Gastrocnemius medialis (tissue), 4 donors: ENCODE measurements at regions of chr12 and their contacts with region 1.

Region 1: GRCh38 chr12:105922670-105923102 is 216.1 kb downstream of the NUAK1 start:
- DNase-seq: peak; percentile 40 to 45
- ATAC-seq: peak; percentile 93 to 99
- H3K4me3 ChIP-seq: no peak overlapping the region
- H3K27ac ChIP-seq: peak overlapping the region; percentile 77 to 89 (median 86)
- H3K4me1 ChIP-seq: peaks cover 25 to 34% of the 10 kb centered on the region in 2 donors
- H3K27me3 ChIP-seq: no peaks in the 10 kb centered on the region
- CTCF ChIP-seq: no peak
- POLR2A ChIP-seq: peak in 1 of 2 donors; percentile 26

Region 2: GRCh38 chr12:105820429-105821140 is 102.1 kb before region 1 on chr12:
- in situ Hi-C with region 1: no loop called
- intact Hi-C with region 1: loop called (anchors 1 kb)
- DNase-seq: peak; percentile 79 to 85
- ATAC-seq: peak; percentile 96 to 99
- H3K4me3 ChIP-seq: no peak overlapping the region
- H3K27ac ChIP-seq: peak overlapping the region; percentile 76 to 85 (median 78)
- H3K4me1 ChIP-seq: peaks cover 23 to 28% of the 10 kb centered on the region in 2 donors
- H3K27me3 ChIP-seq: no peaks in the 10 kb centered on the region
- CTCF ChIP-seq: no peak
- POLR2A ChIP-seq: no peak

Region 3: GRCh38 chr12:105852951-105853350 is 69.7 kb before region 1 on chr12:
- in situ Hi-C with region 1: no loop called
- intact Hi-C with region 1: no loop called
- DNase-seq: peak in 1 of 2 donors; percentile 43
- ATAC-seq: peak; percentile 34 to 55
- H3K4me3 ChIP-seq: peak overlapping the region in 3 of 4 donors; percentile 6 to 36 (median 17)
- H3K27ac ChIP-seq: peak overlapping the region in 3 of 4 donors; percentile 45 to 66 (median 47)
- H3K4me1 ChIP-seq: peaks cover 21 to 25% of the 10 kb centered on the region in 2 donors
- H3K27me3 ChIP-seq: no peaks in the 10 kb centered on the region
- CTCF ChIP-seq: no peak
- POLR2A ChIP-seq: no peak

Region 4: DNA sequence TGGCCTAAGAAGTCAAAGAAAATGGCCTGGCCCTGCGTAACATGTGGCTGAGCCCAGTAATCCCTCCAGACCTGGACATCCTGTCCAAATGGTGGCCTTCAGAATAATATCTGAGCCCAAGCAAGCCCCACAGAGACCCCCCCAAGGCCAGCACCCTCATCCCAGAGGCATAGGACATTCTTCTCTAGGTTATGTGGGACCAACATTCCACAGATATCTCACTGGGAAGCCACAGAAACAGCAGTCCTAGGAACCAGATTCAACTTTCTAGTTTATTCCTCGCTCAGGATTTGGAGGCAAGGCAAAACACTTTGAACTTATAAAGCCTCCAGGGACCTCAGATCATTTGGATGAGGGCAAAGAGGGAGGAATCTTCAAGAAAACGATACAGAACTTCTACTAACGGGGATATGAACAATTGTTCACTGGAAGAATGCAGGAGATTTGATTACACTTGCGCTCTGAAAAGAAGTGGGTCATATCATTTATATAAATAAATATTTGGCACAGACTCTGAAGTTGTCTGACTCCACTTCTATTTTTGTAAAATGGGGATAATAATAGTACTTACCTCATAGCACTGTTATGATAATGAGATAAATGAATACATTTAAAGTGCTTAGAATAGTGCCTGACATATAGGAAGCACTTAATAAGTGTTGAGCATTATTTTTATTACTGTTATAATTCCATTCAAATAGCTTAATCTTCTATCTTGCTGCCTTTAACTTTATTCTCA is 44.5 kb after region 1 on chr12:
- in situ Hi-C with region 1: no loop called
- intact Hi-C with region 1: loop called (anchors 5 kb)
- DNase-seq: no peak
- ATAC-seq: peak; percentile 97 to 99
- H3K4me3 ChIP-seq: no peak overlapping the region
- H3K27ac ChIP-seq: peak overlapping the region; percentile 61 to 81 (median 76)
- H3K4me1 ChIP-seq: peaks cover 16 to 21% of the 10 kb centered on the region in 2 donors
- H3K27me3 ChIP-seq: no peaks in the 10 kb centered on the region
- CTCF ChIP-seq: no peak
- POLR2A ChIP-seq: no peak

Region 5: DNA sequence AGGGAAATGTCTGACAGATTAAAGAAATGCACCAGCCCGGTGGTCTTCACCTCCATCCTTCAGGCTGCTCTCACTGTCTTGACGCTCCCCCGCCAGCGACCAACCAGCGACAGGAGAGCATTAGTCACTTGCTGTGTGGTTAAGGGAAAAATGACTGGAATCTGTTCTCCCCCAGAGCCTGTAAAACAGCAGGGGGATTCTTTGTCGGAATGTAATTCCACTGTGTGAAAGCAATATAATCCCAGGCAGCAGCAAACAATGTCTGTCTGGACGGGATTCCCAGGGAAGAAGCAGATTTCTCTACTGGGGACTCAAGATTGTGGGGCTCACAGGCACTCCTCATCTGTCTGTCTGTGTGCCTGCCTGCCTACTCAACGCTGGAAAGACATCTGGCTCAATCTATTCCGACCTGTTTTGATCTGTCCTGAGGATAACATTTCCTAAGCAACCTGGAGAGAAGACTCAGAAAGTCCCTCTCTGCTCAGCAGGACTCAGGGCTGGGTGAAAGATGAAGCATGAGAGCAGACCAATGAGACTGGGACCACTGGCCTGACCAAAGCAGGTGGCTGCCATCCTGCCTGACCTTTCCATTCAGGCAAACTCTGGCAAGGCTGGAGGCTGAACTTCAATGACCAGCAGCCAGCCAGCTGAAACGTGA is 161.5 kb after region 1 on chr12:
- in situ Hi-C with region 1: no loop called
- intact Hi-C with region 1: no loop called
- DNase-seq: no peak
- ATAC-seq: no peak
- H3K4me3 ChIP-seq: no peak overlapping the region
- H3K27ac ChIP-seq: peak overlapping the region in 1 of 4 donors; percentile 2
- H3K4me1 ChIP-seq: peaks cover 17 to 22% of the 10 kb centered on the region in 2 donors
- H3K27me3 ChIP-seq: no peaks in the 10 kb centered on the region
- CTCF ChIP-seq: no peak
- POLR2A ChIP-seq: no peak

Region 6: GRCh38 chr12:106903241-106903945 is 980.7 kb after region 1 on chr12:
- in situ Hi-C with region 1: no loop called
- intact Hi-C with region 1: no loop called
- DNase-seq: peak; percentile 27 to 62
- ATAC-seq: peak; percentile 90 to 93
- H3K4me3 ChIP-seq: peak overlapping the region; percentile 41 to 91 (median 57)
- H3K27ac ChIP-seq: no peak overlapping the region
- H3K4me1 ChIP-seq: peaks cover 3 to 4% of the 10 kb centered on the region in 2 donors
- H3K27me3 ChIP-seq: no peaks in the 10 kb centered on the region
- CTCF ChIP-seq: no peak
- POLR2A ChIP-seq: no peak